CD4-positive, alpha-beta memory T cell (primary cell): ENCODE measurements at regions of chr15 and their contacts with region 1.

Region 1: DNA sequence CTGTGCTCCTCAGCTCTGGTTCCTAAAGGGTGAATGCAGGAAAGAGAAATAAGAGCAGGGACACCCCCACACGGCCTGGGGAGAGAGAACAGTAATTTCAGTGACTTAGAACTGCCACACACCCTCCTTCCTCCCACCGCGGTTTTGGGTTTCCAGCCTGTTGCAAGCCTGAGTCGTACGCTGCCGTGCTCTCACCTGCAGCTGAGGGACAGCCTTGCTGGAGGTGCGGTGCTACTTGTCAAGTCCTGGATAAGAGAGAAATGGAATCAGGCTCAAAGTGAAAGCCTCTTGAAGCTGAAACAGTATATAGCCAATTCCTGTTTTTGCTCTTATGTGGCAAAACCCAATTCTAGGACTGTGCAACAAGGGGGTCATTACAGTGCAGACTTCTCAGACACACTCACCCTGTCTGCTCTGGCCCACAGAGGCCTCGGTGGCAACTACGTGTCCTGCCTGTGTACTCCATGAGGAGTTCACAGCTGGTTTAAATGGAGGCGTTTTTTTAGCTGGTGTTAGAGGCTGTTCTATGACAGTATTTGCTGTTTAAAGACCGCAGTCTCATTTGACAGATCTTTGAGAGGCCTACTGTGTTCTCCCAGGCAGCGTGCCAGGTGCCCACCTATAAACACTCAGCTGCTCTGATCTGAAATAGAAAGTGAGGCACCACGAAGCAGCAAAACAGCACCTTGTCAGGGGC is 42.9 kb downstream of the TBC1D2B start:
- DNase-seq: peak; percentile 77 to 92 (median 80)
- H3K4me3 ChIP-seq: peak overlapping the region in 1 of 2 donors; percentile 37
- H3K4me3 Mint-ChIP-seq: peak overlapping the region; percentile 28 to 78 (median 70)
- H3K27ac ChIP-seq: peak overlapping the region; percentile 69
- H3K27ac Mint-ChIP-seq: peak overlapping the region; percentile 88 to 97 (median 95)
- H3K4me1 ChIP-seq: peaks cover 91% of the 10 kb centered on the region
- H3K4me1 Mint-ChIP-seq: peaks cover 66 to 85% (median 77%) of the 10 kb centered on the region in 4 donors
- H3K27me3 ChIP-seq: no peaks in the 10 kb centered on the region
- H3K27me3 Mint-ChIP-seq: no peaks in the 10 kb centered on the region

Region 2: DNA sequence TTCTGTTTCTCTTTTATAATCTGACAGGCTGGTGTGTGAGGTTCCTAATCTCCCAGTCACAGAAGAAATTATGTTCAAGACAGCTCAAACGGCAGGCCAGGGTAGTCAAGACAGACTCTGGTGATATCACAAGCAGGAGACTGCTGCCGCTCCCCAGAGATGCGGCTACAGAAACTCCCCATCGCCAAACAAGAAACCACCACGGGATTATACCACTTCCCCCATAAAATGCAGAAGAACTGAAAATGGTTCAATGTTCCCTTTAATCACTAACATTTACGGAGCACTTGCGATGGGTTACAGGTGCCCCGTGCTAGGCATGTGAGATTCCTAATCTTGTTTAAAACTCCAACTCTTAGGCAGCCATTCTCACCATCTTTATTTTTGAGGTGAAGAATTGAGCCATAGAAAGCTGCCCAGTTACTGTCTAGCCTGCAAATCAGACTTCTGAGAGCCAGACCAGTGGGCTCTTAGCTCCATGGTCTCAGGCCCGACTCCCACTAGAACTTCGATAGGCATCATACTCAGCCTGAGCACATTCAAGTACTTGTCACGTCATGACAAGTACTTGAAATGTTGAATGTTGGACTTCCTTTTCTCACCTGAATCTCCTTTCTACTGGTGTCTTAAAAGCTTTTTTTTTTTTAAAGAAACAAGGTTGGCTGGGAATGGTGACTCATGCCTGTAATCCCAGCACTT is 15.5 kb before region 1 on chr15:
- CTCF ChIA-PET with region 1: interaction called, 5 read pairs
- POLR2A ChIA-PET with region 1: interaction called, 10 read pairs
- intact Hi-C with region 1: loop called (anchors 2 kb)
- DNase-seq: peak in 2 of 5 donors; percentile 25 to 45
- H3K4me3 ChIP-seq: no peak overlapping the region
- H3K4me3 Mint-ChIP-seq: peak overlapping the region in 2 of 8 donors; percentile 48 to 51
- H3K27ac ChIP-seq: no peak overlapping the region
- H3K27ac Mint-ChIP-seq: peak overlapping the region in 6 of 7 donors; percentile 59 to 82 (median 78)
- H3K4me1 ChIP-seq: peaks cover 10% of the 10 kb centered on the region
- H3K4me1 Mint-ChIP-seq: peaks cover 22 to 40% (median 29%) of the 10 kb centered on the region in 4 donors
- H3K27me3 ChIP-seq: no peaks in the 10 kb centered on the region
- H3K27me3 Mint-ChIP-seq: no peaks in the 10 kb centered on the region

Region 3: DNA sequence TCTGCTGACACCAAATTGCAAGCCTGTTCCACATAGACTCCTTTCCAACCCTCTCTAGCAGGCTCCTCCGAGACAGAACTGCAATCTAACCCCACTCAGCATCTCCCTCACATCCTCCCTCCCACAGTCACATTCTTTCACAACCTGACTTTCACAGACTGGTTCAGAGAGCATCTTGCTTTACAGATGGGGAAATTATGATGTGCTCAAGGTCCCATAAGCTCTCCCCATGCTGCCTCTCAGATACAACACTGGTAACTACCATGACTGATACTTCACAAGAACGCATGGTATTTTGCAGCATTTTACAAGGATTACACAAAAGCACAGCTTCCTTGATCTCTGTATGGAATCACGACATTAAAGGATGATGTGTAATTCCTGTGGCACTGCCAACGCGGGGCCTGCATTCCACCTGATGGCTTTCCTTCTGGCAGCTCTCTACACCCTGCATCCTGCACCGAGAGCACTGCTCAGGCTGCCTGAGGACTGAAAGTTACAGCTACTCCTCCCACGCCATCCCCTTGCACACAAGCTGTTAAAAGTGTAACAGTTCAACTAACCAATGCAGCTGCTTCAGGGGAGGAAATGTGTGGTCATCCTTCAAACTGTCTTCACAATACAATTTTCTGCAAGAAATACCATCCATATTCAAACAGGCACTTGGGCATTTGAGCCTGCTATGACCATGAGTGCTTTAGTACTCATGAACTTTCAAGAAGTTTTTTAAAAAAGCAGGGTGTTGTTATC is 15.2 kb after region 1 on chr15:
- CTCF ChIA-PET with region 1: interaction called, 25 read pairs
- POLR2A ChIA-PET with region 1: interaction called, 301 read pairs
- intact Hi-C with region 1: loop called (anchors 1 kb)
- DNase-seq: peak; percentile 54 to 72 (median 62)
- H3K4me3 ChIP-seq: peak overlapping the region in 1 of 2 donors; percentile 35
- H3K4me3 Mint-ChIP-seq: peak overlapping the region; percentile 63 to 86 (median 74)
- H3K27ac ChIP-seq: peak overlapping the region; percentile 68
- H3K27ac Mint-ChIP-seq: peak overlapping the region; percentile 86 to 98 (median 92)
- H3K4me1 ChIP-seq: peaks cover 100% of the 10 kb centered on the region
- H3K4me1 Mint-ChIP-seq: peaks cover 79 to 100% (median 92%) of the 10 kb centered on the region in 4 donors
- H3K27me3 ChIP-seq: no peaks in the 10 kb centered on the region
- H3K27me3 Mint-ChIP-seq: no peaks in the 10 kb centered on the region

Region 4: GRCh38 chr15:78056714-78057269 is 22.1 kb after region 1 on chr15:
- CTCF ChIA-PET with region 1: interaction called, 25 read pairs
- POLR2A ChIA-PET with region 1: interaction called, 301 read pairs
- intact Hi-C with region 1: no loop called
- DNase-seq: peak in 2 of 5 donors; percentile 32 to 54
- H3K4me3 ChIP-seq: peak overlapping the region in 1 of 2 donors; percentile 26
- H3K4me3 Mint-ChIP-seq: peak overlapping the region; percentile 31 to 90 (median 82)
- H3K27ac ChIP-seq: peak overlapping the region; percentile 64
- H3K27ac Mint-ChIP-seq: peak overlapping the region; percentile 86 to 98 (median 93)
- H3K4me1 ChIP-seq: peaks cover 98% of the 10 kb centered on the region
- H3K4me1 Mint-ChIP-seq: peaks cover 69 to 91% (median 81%) of the 10 kb centered on the region in 4 donors
- H3K27me3 ChIP-seq: no peaks in the 10 kb centered on the region
- H3K27me3 Mint-ChIP-seq: no peaks in the 10 kb centered on the region

Region 5: DNA sequence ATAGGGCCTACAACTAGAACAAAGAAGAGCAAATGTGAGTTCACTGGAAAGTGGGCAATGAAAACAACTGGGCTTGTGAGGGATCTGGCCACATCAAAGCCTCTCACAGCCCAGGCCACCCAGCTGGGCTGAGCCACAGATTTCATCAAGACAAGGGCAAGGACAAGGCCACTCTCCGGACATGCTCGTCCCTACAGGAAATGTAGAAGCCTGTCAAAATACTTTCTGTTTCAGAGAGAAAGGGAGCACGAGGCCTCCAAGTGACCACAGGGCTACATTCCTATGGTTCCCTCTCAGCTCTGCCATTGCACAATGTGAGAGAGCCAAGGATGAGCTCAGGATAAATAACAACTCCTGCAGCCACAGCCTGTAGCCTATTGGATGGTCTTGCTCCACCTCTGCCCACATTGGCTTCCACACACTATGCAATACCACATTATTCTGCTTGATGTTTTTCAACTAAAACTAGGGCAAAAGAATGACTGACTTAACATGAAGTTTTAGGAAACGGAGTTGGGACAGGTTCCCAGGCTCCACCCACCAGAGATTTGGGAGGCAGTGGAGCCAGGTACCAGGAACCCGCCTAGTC is 30.7 kb after region 1 on chr15:
- CTCF ChIA-PET with region 1: interaction called, 43 read pairs
- POLR2A ChIA-PET with region 1: interaction called, 984 read pairs
- intact Hi-C with region 1: loop called (anchors 2 kb)
- DNase-seq: peak in 3 of 5 donors; percentile 24 to 60 (median 30)
- H3K4me3 ChIP-seq: peak overlapping the region; percentile 19 to 23
- H3K4me3 Mint-ChIP-seq: peak overlapping the region in 1 of 8 donors; percentile 79
- H3K27ac ChIP-seq: peak overlapping the region; percentile 72
- H3K27ac Mint-ChIP-seq: no peak overlapping the region
- H3K4me1 ChIP-seq: peaks cover 98% of the 10 kb centered on the region
- H3K4me1 Mint-ChIP-seq: peaks cover 3 to 67% (median 25%) of the 10 kb centered on the region in 4 donors
- H3K27me3 ChIP-seq: no peaks in the 10 kb centered on the region
- H3K27me3 Mint-ChIP-seq: no peaks in the 10 kb centered on the region

Region 6: GRCh38 chr15:78077058-78077877 is 42.6 kb after region 1 on chr15 and contains the start of gene TBC1D2B:
- CTCF ChIA-PET with region 1: interaction called, 38 read pairs
- POLR2A ChIA-PET with region 1: interaction called, 984 read pairs
- intact Hi-C with region 1: loop called (anchors 1 kb)
- DNase-seq: peak; percentile 65 to 71 (median 68)
- H3K4me3 ChIP-seq: peak within 1 kb of the TSS; percentile 59 to 89
- H3K4me3 Mint-ChIP-seq: peak within 1 kb of the TSS; percentile 93 to 100 (median 99)
- H3K27ac ChIP-seq: peak within 1 kb of the TSS; percentile 83
- H3K27ac Mint-ChIP-seq: peak within 1 kb of the TSS; percentile 89 to 99 (median 97)
- H3K4me1 ChIP-seq: peaks cover 45% of the 10 kb centered on the region
- H3K4me1 Mint-ChIP-seq: peaks cover 31 to 61% (median 46%) of the 10 kb centered on the region in 4 donors
- H3K27me3 ChIP-seq: no peaks in the 10 kb centered on the region
- H3K27me3 Mint-ChIP-seq: no peaks in the 10 kb centered on the region
- total RNA-seq, gene TBC1D2B: 98.1 to 114 TPM